ENCODE measurements at regions of chr5 and their contacts with region 1.

Region 1: GRCh38 chr5:40679155-40679913 is 381 bp upstream of the PTGER4 start:
- DNase-seq: peak; percentile 93
- H3K4me3 Mint-ChIP-seq: peak overlapping the region; percentile 95
- H3K27ac Mint-ChIP-seq: peak overlapping the region; percentile 96
- H3K4me1 Mint-ChIP-seq: peaks cover 51% of the 10 kb centered on the region
- H3K27me3 Mint-ChIP-seq: no peaks in the 10 kb centered on the region

Region 2: DNA sequence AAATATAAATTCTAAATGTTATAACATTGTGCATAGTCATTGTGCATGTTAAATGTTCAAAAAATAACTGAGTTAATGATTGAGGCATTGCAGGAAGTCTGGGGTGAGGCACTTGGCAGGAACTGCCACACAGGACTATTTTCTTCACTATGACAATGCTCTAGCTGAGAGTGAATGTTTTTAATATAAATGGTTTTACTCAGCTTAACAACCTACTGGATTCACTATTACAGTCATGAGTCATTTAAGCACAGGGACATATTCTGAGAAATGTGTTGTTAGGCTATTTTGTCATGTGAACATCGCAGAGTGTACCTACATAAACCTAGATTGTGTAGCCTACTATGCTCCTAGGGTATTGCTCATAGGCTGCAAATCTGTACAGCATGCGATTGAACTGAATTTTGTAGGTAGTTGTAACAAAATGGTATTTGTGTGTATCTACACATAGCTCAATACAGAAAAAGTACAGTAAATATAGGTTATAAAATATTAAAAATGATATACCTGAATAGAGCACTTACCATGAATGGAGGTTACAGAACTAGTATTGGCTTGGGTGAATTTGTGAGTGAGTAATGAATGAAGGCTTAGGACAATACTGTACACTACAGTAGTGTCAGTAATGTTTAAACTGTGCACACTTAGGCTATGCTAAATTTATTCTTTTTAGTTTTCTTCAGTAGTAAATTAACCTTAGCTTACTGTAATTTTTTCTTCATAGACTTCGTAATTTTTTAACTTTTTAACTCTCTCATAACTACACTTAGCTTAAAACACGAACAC is 345.7 kb before region 1 on chr5:
- CTCF ChIA-PET with region 1: no interaction called
- POLR2A ChIA-PET with region 1: interaction called, 16 read pairs
- DNase-seq: peak; percentile 28
- H3K4me3 Mint-ChIP-seq: no peak overlapping the region
- H3K27ac Mint-ChIP-seq: peak overlapping the region; percentile 44
- H3K4me1 Mint-ChIP-seq: peaks cover 53% of the 10 kb centered on the region
- H3K27me3 Mint-ChIP-seq: no peaks in the 10 kb centered on the region

Region 3: DNA sequence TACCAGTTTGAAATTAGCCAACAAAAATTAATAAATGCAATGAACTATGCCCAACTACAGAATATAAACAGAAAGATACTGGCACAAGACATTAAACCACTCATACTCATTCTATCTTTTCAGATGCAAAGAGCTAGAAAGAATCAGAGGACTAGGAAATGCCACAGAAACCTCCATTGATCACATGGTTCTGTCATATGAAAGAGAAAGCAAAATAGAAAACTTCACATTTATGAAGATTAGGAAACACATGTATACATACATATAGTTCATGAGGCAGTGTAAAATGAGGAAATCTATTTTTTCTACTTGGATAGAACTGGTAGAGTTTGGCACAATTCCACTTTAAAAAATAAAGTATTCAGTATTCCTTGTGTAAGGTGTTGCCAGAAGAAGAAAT is 274.7 kb before region 1 on chr5:
- CTCF ChIA-PET with region 1: interaction called, 11 read pairs
- POLR2A ChIA-PET with region 1: interaction called, 145 read pairs
- DNase-seq: no peak
- H3K4me3 Mint-ChIP-seq: peak overlapping the region; percentile 12
- H3K27ac Mint-ChIP-seq: peak overlapping the region; percentile 95
- H3K4me1 Mint-ChIP-seq: peaks cover 76% of the 10 kb centered on the region
- H3K27me3 Mint-ChIP-seq: no peaks in the 10 kb centered on the region

Region 4: DNA sequence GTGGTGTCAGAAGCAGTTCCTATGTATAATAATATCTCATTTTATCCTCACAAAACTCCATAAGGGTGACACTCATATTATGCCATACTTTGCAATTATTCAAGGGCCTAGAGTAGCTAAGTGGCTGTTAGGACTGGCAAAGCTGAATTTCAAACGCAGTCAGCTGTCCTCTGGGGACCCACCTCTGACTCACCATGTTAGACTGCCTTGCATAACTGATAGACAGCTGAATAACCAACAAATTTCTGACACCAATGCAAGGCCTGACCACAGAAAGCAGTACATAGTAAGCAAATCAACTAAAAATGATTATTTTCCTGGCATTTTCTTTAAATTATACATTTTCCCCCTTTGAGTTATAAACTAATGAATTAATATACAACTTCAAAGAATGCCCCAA is 251.2 kb before region 1 on chr5:
- CTCF ChIA-PET with region 1: interaction called, 4 read pairs
- POLR2A ChIA-PET with region 1: interaction called, 51 read pairs
- DNase-seq: peak; percentile 43
- H3K4me3 Mint-ChIP-seq: no peak overlapping the region
- H3K27ac Mint-ChIP-seq: peak overlapping the region; percentile 84
- H3K4me1 Mint-ChIP-seq: peaks cover 44% of the 10 kb centered on the region
- H3K27me3 Mint-ChIP-seq: no peaks in the 10 kb centered on the region

Region 5: GRCh38 chr5:40486437-40487275 is 192.7 kb before region 1 on chr5:
- CTCF ChIA-PET with region 1: interaction called, 3 read pairs
- POLR2A ChIA-PET with region 1: interaction called, 14 read pairs
- DNase-seq: peak; percentile 71
- H3K4me3 Mint-ChIP-seq: peak overlapping the region; percentile 14
- H3K27ac Mint-ChIP-seq: peak overlapping the region; percentile 88
- H3K4me1 Mint-ChIP-seq: peaks cover 80% of the 10 kb centered on the region
- H3K27me3 Mint-ChIP-seq: no peaks in the 10 kb centered on the region